ENCODE measurements at regions of chr17 and their contacts with region 1.

Region 1: DNA sequence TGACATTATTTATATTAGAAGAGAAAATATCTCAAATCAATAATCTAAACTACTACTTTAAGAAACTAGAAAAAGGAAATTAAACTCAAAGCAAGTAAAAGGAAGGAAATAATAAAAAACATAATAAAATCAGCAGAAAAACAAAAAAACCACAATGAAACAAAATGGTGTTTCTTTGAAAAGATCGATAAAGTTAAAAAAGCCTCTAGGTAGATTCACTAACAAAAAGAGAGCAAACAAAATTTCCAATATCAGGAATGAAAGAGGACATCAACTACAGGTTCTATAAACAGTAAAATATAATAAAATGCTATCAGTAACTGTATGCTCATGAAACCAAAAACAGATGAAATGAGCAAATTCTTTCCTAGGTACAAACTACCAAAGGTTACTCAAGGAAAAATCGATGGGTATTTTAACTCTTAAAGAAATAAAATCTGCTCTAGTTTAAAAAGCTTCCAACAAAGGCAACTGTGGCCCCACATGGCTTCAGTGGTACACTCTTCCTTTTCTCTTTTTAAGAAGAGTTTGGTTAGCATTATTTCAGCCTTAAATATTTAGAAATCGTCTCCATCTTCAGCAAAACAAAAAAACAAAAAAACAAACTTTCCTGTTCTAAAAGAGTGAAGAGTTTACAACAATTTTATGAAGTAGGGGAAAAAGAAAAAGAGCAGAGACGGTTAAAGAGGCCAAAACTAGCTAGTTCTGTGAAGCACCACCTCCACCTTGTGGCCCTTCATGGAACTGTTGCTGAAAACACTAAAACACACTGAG is 102.2 kb downstream of the TRIM37 start:
- DNase-seq: peak in 5 of 6 donors; percentile 21 to 72 (median 37)
- ATAC-seq: peak; percentile 74 to 91 (median 88)
- H3K4me3 ChIP-seq: no peak overlapping the region
- H3K27ac ChIP-seq: no peak overlapping the region
- H3K4me1 ChIP-seq: peaks cover 0 to 13% (median 3%) of the 10 kb centered on the region in 3 donors
- H3K27me3 ChIP-seq: no peaks in the 10 kb centered on the region
- CTCF ChIP-seq: peak; percentile 78 to 93 (median 90)

Region 2: GRCh38 chr17:58587702-58588254 is 416.7 kb before region 1 on chr17:
- intact Hi-C with region 1: loop called in 1 of 3 experiments (anchors 10 kb)
- DNase-seq: peak; percentile 23 to 74 (median 50)
- ATAC-seq: peak; percentile 53 to 94 (median 90)
- H3K4me3 ChIP-seq: no peak overlapping the region
- H3K27ac ChIP-seq: no peak overlapping the region
- H3K4me1 ChIP-seq: no peaks in the 10 kb centered on the region
- H3K27me3 ChIP-seq: no peaks in the 10 kb centered on the region
- CTCF ChIP-seq: peak; percentile 76 to 92 (median 87)

Region 3: DNA sequence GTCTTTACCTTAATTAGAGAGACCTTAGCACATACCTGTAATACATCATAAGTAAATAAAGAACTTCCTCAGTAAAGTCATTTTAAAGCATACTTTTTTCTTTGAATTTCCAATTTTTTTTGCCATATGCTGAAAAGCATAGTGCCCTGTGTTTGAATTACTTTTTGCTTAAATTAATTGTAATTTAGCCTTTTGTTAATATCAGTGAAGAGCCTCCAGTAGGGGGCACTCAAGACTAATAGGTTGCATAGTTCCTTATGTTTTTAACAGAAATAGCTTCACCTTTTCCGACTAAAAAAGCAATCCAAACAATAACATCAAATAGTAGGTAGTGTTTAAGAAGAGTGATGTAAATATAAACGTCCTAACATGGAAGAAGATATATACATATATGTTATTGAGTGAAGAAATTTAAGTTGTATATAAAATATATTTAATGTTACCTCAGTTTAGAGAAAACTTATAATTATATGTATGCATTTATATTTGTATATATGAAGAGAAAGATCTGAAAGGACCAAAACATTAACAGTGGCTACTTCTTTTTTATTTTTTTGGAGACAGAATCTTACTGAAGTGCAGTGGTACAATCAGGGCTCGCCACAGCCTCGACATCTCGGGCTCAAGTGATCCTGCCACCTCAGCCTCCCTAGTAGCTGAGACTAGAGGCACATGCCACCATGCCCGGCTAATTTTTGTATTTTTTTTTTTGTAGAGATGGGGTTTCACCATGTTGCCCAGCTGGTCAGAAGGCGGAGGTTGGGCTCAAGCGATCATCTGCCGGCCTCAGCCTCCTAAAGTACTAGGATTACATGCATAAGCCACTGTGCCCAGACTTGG is 293.4 kb before region 1 on chr17:
- intact Hi-C with region 1: loop called in 1 of 3 experiments (anchors 10 kb)
- DNase-seq: peak in 2 of 6 donors; percentile 19 to 30
- ATAC-seq: peak in 2 of 4 donors; percentile 57 to 63
- H3K4me3 ChIP-seq: no peak overlapping the region
- H3K27ac ChIP-seq: no peak overlapping the region
- H3K4me1 ChIP-seq: no peaks in the 10 kb centered on the region
- H3K27me3 ChIP-seq: no peaks in the 10 kb centered on the region
- CTCF ChIP-seq: peak in 3 of 4 donors; percentile 46 to 60 (median 59)

Region 4: GRCh38 chr17:59046192-59046591 is 41.7 kb after region 1 on chr17:
- intact Hi-C with region 1: no loop called
- DNase-seq: no peak
- ATAC-seq: no peak
- H3K4me3 ChIP-seq: no peak overlapping the region
- H3K27ac ChIP-seq: no peak overlapping the region
- H3K4me1 ChIP-seq: no peaks in the 10 kb centered on the region
- H3K27me3 ChIP-seq: no peaks in the 10 kb centered on the region
- CTCF ChIP-seq: no peak

Region 5: DNA sequence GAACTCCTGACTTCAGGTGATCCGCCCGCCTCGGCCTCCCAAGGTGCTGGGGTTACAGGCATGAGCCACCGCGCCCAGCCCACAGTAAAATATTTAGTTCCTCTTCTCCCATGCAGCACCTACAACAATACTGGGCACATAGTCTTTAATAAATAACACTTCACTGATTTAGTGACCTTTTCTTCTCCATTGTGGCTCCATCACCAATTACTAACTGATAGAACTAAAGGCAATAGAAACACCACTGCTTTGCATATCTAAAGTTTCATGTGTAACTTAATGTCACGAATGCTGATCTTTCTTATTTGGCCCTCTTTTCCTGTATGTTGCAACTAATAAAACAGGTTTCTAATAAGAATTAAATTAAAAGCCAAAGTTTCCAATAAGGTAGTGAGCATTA is 63.2 kb after region 1 on chr17:
- intact Hi-C with region 1: no loop called
- DNase-seq: no peak
- ATAC-seq: no peak
- H3K4me3 ChIP-seq: no peak overlapping the region
- H3K27ac ChIP-seq: no peak overlapping the region
- H3K4me1 ChIP-seq: no peaks in the 10 kb centered on the region
- H3K27me3 ChIP-seq: no peaks in the 10 kb centered on the region
- CTCF ChIP-seq: no peak

Measured in pancreas (tissue), 10 donors.